ENCODE measurements at regions of chr6 and their contacts with region 1.

Region 1: DNA sequence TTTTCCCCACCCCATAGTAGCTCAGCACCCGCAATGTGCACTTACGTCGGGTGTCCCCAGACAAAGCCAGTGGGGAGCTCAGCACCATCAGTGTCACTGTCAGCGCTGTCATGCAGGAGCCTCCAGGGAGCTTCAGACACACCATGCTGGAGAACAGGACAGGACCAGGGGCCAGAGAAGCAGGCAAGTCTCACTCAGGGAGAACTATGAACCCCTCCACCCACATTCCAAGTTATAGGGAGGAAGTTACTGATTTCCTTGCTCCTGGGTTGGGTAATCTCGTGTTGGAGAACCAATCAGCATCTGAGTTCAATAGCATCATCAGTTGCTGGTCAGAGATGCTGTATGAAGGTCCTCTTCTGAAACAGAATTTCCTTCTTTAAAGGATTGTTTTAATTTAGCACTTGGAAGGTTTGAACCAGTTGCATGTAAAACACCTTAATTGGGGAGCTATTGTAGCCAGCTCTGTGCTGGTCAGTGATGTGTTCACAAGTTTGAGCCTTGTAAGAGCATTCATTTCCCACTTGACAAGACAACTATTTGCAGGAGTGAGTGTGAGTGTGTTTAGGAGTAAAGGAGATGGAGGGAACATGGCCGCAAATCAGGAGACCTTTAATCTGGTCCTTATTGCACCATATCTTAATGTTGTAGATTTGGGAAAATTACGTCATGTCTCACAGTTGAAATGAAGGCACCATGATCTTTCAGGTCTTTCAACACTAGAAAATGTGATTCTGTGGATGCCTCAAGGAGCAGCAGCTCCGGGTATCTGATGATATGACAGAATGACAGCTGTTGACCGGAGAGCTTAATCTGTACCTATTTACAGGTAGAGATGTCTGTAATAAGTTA is at the start of gene HLA-DRB1:
- DNase-seq: no peak
- H3K4me3 ChIP-seq: no peak within 1 kb of the TSS
- H3K27ac ChIP-seq: no peak within 1 kb of the TSS
- H3K27me3 ChIP-seq: no peaks in the 10 kb centered on the region
- CTCF ChIP-seq: no peak

Region 2: DNA sequence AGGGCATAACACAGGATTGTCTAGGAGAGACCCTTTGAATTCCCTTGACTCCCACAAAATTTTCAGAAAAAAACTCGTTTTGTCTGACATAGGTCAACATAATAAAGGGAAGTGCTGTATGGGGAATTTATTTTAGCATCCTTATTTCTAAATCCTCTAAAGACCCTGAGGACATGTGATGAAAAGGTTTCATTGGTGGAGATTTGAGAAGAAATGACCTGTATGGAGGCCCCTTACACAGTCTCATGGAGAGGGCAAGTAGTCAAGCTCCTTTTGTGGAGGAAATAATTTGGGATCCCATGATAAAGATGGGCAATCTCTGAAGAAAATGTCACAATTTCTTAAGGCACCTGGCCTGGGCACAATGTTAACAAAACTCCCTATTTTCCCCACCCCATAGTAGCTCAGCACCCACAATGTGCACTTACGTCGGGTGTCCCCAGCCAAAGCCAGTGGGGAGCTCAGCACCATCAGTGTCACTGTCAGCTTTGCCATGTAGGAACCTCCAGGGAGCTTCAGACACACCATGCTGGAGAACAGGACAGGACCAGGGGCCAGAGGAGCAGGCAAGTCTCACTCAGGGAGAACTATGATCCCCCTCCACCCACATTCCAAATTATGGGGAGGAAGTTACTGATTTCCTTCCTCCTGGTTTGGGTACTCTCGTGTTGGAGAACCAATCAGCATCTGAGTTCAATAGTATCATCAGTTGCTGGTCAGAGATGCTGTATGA is 60.0 kb before region 1 on chr6 and contains the start of gene HLA-DRB5:
- in situ Hi-C with region 1: loop called (anchors 10 kb)
- DNase-seq: no peak
- H3K4me3 ChIP-seq: no peak within 1 kb of the TSS
- H3K27ac ChIP-seq: no peak within 1 kb of the TSS
- H3K27me3 ChIP-seq: no peaks in the 10 kb centered on the region
- CTCF ChIP-seq: no peak

Region 3: GRCh38 chr6:33029328-33030184 is 439.7 kb after region 1 on chr6:
- in situ Hi-C with region 1: no loop called
- DNase-seq: peak; percentile 6
- H3K4me3 ChIP-seq: no peak overlapping the region
- H3K27ac ChIP-seq: no peak overlapping the region
- H3K27me3 ChIP-seq: peaks cover 19% of the 10 kb centered on the region
- CTCF ChIP-seq: no peak

Measured in brain microvascular endothelial cell (primary cell).